ENCODE measurements at regions of chr19 and their contacts with region 1.

Region 1: DNA sequence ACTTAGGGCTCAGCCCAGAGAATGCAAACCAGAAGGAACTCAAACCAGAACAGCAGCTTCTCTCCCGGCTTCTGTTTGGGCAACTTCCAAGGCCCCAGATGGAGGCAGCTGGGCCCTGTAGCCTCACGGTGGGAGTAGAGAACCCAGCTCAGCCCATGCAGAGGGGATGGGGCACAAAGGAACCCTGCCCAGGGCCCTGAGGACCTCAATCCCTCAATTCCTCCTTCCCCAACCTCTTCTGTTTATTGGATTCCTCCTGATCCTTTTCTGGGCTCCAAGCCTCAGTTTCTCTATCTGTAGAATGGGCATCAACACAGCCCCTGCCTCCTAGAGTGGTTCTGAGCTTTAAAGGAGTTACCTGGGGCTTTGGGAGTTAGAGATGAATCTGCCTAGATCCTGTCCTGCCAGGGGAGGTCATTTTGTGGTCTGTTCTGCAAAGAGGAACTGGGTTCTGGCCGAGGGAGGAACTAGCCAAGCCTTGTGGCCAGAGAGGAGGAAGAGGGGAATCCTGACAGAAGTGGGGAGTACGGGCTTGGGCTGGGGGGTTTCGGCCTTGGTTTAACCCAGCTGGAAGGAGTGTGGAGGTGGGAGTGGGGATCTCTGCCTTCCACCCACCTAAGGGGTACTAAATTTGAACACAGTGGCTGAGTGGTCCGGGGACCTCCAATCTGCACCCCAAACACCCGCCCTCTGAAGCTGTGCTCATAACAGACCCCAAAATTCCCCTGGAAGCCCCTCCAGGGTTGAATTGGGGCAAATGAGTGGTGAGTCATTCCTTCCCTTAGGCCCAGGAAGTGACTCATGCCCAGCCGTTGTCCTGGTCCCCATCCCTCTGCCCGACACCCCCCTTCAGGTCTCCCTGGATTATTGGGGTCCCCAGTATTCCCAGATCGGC is 2.7 kb downstream of the ADGRE5 start:
- DNase-seq: peak; percentile 81
- H3K4me3 Mint-ChIP-seq: peak overlapping the region; percentile 84
- H3K27ac Mint-ChIP-seq: peak overlapping the region; percentile 95
- H3K4me1 Mint-ChIP-seq: peaks cover 30% of the 10 kb centered on the region
- H3K27me3 Mint-ChIP-seq: no peaks in the 10 kb centered on the region

Region 2: DNA sequence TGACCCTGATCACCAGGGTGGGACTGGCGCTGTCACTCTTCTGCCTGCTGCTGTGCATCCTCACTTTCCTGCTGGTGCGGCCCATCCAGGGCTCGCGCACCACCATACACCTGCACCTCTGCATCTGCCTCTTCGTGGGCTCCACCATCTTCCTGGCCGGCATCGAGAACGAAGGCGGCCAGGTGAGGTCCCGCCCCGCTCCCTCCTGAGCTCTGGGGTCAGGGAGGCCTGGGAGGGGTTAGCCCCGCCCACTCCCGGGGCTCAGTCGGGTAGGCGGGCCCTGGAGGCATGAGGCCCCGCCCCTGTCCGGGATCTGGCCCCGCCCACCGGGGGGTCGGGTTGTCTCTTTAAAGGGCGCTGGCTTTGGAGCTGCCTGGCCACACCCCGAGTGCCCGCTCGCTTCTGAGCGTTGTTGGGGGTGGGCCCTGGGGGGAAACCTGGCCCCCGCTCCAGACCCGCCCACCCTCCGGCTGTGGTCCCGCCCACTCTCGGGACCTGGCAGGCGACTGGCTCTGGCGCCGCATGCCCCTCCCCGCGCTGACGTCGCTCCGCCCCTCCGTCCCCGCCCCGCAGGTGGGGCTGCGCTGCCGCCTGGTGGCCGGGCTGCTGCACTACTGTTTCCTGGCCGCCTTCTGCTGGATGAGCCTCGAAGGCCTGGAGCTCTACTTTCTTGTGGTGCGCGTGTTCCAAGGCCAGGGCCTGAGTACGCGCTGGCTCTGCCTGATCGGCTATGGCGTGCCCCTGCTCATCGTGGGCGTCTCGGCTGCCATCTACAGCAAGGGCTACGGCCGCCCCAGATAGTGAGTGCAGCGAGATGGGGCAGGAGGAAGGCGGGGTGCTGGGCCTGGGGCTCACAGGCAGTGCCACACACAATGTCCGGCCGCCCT is 22.1 kb after region 1 on chr19:
- CTCF ChIA-PET with region 1: interaction called, 27 read pairs
- POLR2A ChIA-PET with region 1: interaction called, 6 read pairs
- intact Hi-C with region 1: no loop called
- DNase-seq: peak; percentile 93
- H3K4me3 Mint-ChIP-seq: no peak overlapping the region
- H3K27ac Mint-ChIP-seq: peak overlapping the region; percentile 76
- H3K4me1 Mint-ChIP-seq: peaks cover 25% of the 10 kb centered on the region
- H3K27me3 Mint-ChIP-seq: no peaks in the 10 kb centered on the region

Region 3: GRCh38 chr19:14419106-14419813 is 35.4 kb after region 1 on chr19 and contains the start of gene DDX39A:
- CTCF ChIA-PET with region 1: no interaction called
- POLR2A ChIA-PET with region 1: interaction called, 4 read pairs
- intact Hi-C with region 1: loop called (anchors 1 kb)
- DNase-seq: peak; percentile 99
- H3K4me3 Mint-ChIP-seq: peak within 1 kb of the TSS; percentile 95
- H3K27ac Mint-ChIP-seq: peak within 1 kb of the TSS; percentile 96
- H3K4me1 Mint-ChIP-seq: peaks cover 29% of the 10 kb centered on the region
- H3K27me3 Mint-ChIP-seq: peaks cover 2% of the 10 kb centered on the region
- total RNA-seq, gene DDX39A: 200 to 204 TPM

Region 4: DNA sequence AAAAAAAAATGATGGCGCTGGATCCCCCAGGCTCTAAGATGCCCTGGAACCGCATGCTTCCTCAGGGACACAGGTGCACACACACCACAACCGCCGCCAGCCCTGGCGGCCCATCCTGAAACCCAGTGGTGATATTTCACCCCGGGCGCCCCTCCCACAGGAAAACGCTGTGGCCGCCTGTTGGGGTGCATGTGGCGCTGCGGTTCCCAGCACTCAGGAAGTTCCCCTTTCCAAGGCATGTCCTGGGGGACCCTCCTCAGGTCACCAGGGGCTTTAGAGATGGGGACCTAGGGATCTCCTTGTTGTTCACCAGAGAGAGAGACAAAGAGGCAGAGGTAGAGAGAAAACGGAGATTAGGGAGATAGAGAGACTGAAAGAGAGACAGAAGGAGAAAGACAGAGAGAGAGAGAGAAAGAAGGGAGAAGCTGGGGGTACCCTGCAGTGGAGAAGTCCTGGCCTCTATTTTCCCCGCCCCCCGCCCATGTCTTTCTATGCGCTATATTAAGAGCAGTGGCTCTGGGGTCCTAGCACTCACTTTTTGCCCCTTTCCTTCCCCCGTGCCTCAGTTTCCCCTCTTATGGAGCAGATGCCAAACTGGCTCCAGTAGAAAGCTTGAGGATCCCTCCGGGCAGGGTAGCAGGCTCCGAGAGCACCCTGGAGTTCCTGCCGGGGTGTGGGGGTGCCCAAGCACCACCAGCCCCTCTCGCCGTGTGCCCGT is 392.1 kb after region 1 on chr19:
- CTCF ChIA-PET with region 1: no interaction called
- POLR2A ChIA-PET with region 1: interaction called, 23 read pairs
- intact Hi-C with region 1: no loop called
- DNase-seq: no peak
- H3K4me3 Mint-ChIP-seq: peak overlapping the region; percentile 20
- H3K27ac Mint-ChIP-seq: no peak overlapping the region
- H3K4me1 Mint-ChIP-seq: peaks cover 6% of the 10 kb centered on the region
- H3K27me3 Mint-ChIP-seq: peaks cover 27% of the 10 kb centered on the region